ENCODE measurements at regions of chr4 and their contacts with region 1.

Region 1: GRCh38 chr4:72302981-72303704 is 265.9 kb downstream of the ADAMTS3 start:
- DNase-seq: peak; percentile 49
- H3K4me3 ChIP-seq: no peak overlapping the region
- H3K27ac ChIP-seq: no peak overlapping the region
- H3K4me1 ChIP-seq: no peaks in the 10 kb centered on the region
- H3K27me3 ChIP-seq: no peaks in the 10 kb centered on the region
- CTCF ChIP-seq: peak; percentile 64 to 68
- POLR2A ChIP-seq: no peak

Region 2: GRCh38 chr4:70651864-70652506 is 1651.2 kb before region 1 on chr4:
- CTCF ChIA-PET with region 1: interaction called, 3 read pairs
- POLR2A ChIA-PET with region 1: no interaction called
- dilution Hi-C with region 1: no loop called
- intact Hi-C with region 1: loop called (anchors 2 kb)
- DNase-seq: peak; percentile 55
- H3K4me3 ChIP-seq: no peak overlapping the region
- H3K27ac ChIP-seq: no peak overlapping the region
- H3K4me1 ChIP-seq: peaks cover 12% of the 10 kb centered on the region
- H3K27me3 ChIP-seq: peaks cover 0 to 8% of the 10 kb centered on the region in 2 experiments
- CTCF ChIP-seq: peak; percentile 23 to 29
- POLR2A ChIP-seq: no peak

Region 3: DNA sequence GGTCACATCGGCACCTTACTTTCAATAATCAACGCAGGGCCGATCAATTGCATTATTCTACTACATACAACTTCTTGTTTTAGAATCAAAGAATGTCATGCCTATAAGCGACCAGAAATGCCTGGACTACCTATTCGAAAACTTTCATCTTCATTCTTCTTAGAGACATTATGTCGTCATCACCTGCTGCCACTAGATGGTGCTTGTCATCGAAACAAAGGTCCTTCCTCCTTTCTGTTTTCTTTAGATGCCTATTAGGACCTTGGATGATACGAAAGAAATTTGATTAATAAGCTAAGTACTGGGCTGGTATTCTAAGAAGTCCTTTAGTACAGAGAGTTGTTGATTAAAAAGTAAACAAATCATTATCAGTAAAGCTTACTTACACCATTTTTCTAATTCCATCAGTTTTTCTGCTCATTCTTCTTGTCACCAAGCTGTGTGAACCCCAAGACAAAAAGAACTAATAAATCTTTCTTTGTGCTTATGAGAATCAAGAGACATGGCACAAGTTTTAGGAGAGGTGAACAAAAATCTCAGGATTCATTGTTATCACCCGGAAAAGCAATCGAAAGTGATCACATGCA is 1118.9 kb before region 1 on chr4:
- CTCF ChIA-PET with region 1: interaction called, 4 read pairs
- POLR2A ChIA-PET with region 1: no interaction called
- dilution Hi-C with region 1: no loop called
- intact Hi-C with region 1: loop called (anchors 10 kb)
- DNase-seq: peak; percentile 37
- H3K4me3 ChIP-seq: no peak overlapping the region
- H3K27ac ChIP-seq: no peak overlapping the region
- H3K4me1 ChIP-seq: peaks cover 4% of the 10 kb centered on the region
- H3K27me3 ChIP-seq: peaks cover 25 to 49% of the 10 kb centered on the region in 2 experiments
- CTCF ChIP-seq: peak; percentile 46 to 52
- POLR2A ChIP-seq: no peak

Region 4: DNA sequence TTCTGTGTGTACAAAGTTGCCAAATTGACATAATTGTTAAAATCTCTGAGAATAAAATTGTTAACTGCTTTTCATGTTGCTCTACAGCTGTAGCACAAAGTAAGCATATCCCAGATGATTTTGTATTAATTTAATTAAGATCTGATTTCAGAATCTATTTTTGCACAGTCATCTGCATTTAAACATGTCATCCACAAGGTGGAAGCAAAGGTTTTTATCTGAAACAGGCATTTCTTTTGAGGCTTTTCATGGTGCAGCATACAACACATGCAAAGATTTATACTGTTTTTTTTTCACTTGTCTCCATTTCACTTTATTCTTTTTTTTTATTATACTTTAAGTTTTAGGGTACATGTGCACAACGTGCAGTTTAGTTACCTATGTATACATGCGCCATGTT is 570.4 kb before region 1 on chr4:
- CTCF ChIA-PET with region 1: interaction called, 3 read pairs
- POLR2A ChIA-PET with region 1: no interaction called
- dilution Hi-C with region 1: no loop called
- intact Hi-C with region 1: loop called (anchors 1 kb)
- DNase-seq: peak; percentile 14
- H3K4me3 ChIP-seq: no peak overlapping the region
- H3K27ac ChIP-seq: no peak overlapping the region
- H3K4me1 ChIP-seq: no peaks in the 10 kb centered on the region
- H3K27me3 ChIP-seq: no peaks in the 10 kb centered on the region
- CTCF ChIP-seq: peak in 1 of 2 donors; percentile 7
- POLR2A ChIP-seq: no peak

Region 5: DNA sequence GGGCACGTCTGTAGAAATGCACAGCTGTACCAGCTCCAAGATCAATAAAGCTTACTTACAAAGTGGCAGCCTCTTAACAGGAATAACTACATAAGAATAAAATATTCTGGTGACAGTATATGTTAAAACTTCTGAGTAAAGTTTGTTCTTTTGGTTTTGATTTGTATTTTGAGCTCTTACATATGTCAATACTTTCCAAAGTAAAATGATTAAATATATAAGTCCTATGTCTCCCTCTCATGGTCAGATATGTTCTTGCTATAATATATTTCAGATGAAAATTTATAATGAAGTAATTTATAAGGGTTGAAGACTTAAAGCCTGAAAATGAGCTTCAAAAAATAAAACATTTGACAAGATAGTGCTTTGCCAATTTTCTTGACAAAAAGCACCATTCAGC is 17.0 kb before region 1 on chr4:
- CTCF ChIA-PET with region 1: interaction called, 18 read pairs
- POLR2A ChIA-PET with region 1: no interaction called
- dilution Hi-C with region 1: no loop called
- intact Hi-C with region 1: no loop called
- DNase-seq: peak; percentile 10
- H3K4me3 ChIP-seq: no peak overlapping the region
- H3K27ac ChIP-seq: no peak overlapping the region
- H3K4me1 ChIP-seq: no peaks in the 10 kb centered on the region
- H3K27me3 ChIP-seq: no peaks in the 10 kb centered on the region
- CTCF ChIP-seq: no peak
- POLR2A ChIP-seq: no peak

Measured in endothelial cell of umbilical vein (primary cell).